ENCODE measurements at regions of chr9 and their contacts with region 1.

Region 1: DNA sequence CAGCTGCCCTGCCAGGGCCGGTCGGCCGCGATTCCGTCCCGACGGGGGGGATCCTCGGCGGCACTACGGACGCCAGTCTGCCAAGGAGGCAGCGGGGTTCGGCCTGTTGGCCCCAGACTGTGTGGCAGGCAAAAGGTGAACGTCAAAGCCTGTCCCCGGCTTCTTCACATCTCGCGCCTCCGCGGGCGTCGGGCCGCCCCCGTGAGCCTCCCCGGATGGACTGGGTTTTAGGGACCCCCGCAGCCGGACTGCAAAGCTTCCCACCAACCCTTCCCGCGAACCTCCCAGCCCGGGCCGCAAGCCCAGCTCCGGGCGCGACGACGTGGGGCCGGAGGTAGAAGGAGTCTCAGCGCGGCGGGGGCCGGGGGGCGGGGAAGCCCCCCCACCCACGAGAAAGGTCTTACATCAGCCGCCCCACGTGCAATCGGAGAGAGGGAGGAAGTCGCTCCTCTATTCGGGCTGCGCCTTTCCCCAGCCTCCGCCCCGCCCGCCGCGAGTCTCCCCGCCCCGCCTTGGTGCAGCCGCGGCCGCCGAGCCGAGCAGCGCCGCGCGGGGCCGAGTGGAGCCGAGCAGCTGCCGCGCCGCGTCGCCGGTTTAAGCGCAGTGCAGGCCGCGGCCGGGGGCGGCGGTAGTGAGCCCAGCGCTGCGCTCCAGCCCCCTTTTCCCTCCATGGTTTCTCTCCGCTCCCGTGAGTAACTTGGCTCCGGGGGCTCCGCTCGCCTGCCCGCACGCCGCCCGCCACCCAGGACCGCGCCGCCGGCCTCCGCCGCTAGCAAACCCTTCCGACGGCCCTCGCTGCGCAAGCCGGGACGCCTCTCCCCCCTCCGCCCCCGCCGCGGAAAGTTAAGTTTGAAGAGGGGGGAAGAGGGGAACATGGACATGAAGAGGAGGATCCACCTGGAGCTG is at the start of gene ANP32B:
- DNase-seq: peak; percentile 96
- H3K4me3 Mint-ChIP-seq: peak within 1 kb of the TSS; percentile 83
- H3K27ac Mint-ChIP-seq: peak within 1 kb of the TSS; percentile 93
- H3K4me1 Mint-ChIP-seq: peaks cover 37% of the 10 kb centered on the region
- H3K27me3 Mint-ChIP-seq: no peaks in the 10 kb centered on the region
- total RNA-seq, gene ANP32B: 352 to 358 TPM

Region 2: GRCh38 chr9:97696803-97697601 is 285.9 kb before region 1 on chr9 and contains the start of gene XPA:
- CTCF ChIA-PET with region 1: no interaction called
- POLR2A ChIA-PET with region 1: no interaction called
- intact Hi-C with region 1: loop called (anchors 5 kb)
- DNase-seq: peak; percentile 98
- H3K4me3 Mint-ChIP-seq: peak within 1 kb of the TSS; percentile 91
- H3K27ac Mint-ChIP-seq: peak within 1 kb of the TSS; percentile 91
- H3K4me1 Mint-ChIP-seq: peaks cover 47% of the 10 kb centered on the region
- H3K27me3 Mint-ChIP-seq: no peaks in the 10 kb centered on the region
- total RNA-seq, gene XPA: 8.5 to 9.6 TPM

Region 3: GRCh38 chr9:97906236-97906831 is 76.6 kb before region 1 on chr9:
- CTCF ChIA-PET with region 1: interaction called, 5 read pairs
- POLR2A ChIA-PET with region 1: interaction called, 3 read pairs
- intact Hi-C with region 1: loop called (anchors 5 kb)
- DNase-seq: peak; percentile 74
- H3K4me3 Mint-ChIP-seq: peak overlapping the region; percentile 66
- H3K27ac Mint-ChIP-seq: peak overlapping the region; percentile 94
- H3K4me1 Mint-ChIP-seq: peaks cover 78% of the 10 kb centered on the region
- H3K27me3 Mint-ChIP-seq: no peaks in the 10 kb centered on the region

Region 4: DNA sequence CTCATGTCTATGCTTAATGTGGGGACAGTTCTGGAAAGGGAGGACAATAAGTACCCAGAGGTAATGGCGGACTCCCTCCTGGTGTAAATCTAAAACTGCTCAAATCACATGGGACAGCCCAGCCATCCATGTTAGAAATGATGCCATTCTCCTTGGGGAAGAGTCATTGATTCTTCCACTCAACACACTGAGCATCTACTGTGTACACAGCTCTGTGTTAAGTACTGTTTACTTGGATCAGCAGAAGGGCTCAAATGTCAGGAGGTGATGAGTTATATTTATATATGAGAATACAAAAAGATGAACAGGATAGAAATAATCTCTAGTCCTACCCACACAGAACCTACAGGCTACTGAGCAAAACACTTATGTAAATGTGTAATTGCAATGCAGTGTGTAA is 41.8 kb after region 1 on chr9:
- CTCF ChIA-PET with region 1: no interaction called
- POLR2A ChIA-PET with region 1: no interaction called
- intact Hi-C with region 1: no loop called
- DNase-seq: no peak
- H3K4me3 Mint-ChIP-seq: no peak overlapping the region
- H3K27ac Mint-ChIP-seq: no peak overlapping the region
- H3K4me1 Mint-ChIP-seq: no peaks in the 10 kb centered on the region
- H3K27me3 Mint-ChIP-seq: no peaks in the 10 kb centered on the region

Region 5: DNA sequence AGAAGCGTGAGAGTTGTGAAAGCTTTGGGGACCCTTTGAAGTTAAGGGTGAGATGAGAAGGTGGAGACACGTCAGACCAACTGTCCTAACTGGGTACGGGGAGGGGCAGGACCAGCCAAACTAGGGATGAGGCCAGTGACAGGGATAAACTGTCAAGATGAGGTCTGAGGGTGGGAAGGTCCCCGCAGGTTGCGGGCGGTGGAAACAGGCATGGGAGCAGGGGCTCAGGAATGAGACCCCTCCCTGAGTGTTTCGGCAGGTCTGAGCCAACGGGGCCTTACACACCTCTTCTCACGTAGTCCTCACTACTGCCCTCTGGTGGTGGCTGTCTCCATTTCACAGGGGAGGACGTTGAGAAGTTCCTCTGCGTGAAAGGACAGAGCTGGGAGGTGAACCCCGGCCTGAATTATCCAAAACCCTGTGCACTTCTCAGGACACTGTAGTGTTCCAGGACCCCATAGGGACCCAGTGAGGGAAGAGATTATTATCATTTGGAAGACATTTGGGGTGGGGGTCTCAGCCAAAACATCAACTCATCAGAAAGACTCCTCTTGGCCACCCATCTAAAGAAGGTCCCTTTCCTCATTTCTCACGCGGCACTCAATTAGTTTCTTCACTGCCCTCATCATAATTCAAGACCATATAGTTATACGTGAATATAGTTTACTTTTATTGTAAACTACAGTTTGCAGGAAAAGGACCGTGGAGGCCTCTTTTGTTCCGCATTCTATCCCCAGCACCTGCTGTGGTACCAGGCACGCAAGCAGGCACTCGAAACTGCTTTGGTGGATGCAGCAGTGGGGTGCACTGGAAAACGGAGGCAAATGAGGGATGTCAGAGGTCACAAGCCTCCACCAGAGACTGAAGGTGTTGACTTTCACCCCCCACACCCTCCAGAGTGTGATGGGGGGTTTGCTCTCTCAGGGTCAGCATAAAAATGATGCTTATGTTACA is 51.9 kb after region 1 on chr9:
- CTCF ChIA-PET with region 1: interaction called, 20 read pairs
- POLR2A ChIA-PET with region 1: no interaction called
- intact Hi-C with region 1: no loop called
- DNase-seq: peak; percentile 92
- H3K4me3 Mint-ChIP-seq: peak overlapping the region; percentile 27
- H3K27ac Mint-ChIP-seq: no peak overlapping the region
- H3K4me1 Mint-ChIP-seq: peaks cover 8% of the 10 kb centered on the region
- H3K27me3 Mint-ChIP-seq: peaks cover 1% of the 10 kb centered on the region

Region 6: DNA sequence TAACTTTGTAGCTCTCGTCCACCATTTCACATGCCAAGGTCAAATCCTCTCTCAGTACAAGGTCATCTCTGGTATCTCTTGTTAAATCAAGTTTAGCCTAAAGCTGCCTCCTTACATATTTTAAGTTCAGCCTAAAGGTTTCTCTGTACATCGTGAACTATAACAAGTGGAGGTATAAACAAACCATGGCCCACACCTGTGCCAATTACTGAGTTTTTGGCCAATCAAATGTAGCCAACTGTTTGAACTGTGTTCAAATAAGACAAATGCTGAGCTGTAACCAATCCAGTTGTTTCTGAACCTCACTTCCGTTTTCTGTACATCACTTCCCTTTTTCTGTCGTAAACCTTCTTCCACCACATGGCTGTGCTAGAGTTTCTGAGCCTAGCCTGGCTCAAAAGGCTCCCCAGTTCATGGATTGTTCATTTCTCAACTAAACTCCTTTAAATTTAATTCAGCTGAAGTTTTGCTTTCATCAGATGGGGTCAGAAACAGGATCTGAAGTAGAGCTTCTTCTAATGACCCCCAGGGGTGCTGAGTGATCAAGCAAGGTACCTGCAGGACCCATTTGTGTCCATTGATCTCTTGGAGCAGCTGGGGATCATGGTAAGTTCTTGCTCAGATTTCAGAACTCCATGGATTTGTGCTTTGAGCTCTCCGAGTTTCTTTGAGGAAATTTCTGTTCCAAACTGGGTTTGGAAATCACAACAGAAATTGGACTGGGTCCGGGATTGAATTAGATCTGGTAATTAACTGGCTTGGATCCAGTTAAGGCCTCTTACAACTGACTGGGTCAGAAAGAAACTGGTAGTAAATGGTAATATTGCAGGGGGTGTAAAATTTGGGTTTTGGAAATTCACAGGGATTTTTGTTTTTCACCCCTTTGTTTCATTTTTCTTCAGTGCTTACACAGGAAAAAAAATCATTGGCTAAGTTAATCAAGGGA is 62.6 kb after region 1 on chr9:
- CTCF ChIA-PET with region 1: interaction called, 3 read pairs
- POLR2A ChIA-PET with region 1: interaction called, 11 read pairs
- intact Hi-C with region 1: no loop called
- DNase-seq: peak; percentile 44
- H3K4me3 Mint-ChIP-seq: peak overlapping the region; percentile 84
- H3K27ac Mint-ChIP-seq: peak overlapping the region; percentile 83
- H3K4me1 Mint-ChIP-seq: peaks cover 24% of the 10 kb centered on the region
- H3K27me3 Mint-ChIP-seq: no peaks in the 10 kb centered on the region

Region 7: GRCh38 chr9:98056269-98057137 is 73.6 kb after region 1 on chr9 and contains the start of gene NANS:
- CTCF ChIA-PET with region 1: interaction called, 3 read pairs
- POLR2A ChIA-PET with region 1: interaction called, 27 read pairs
- intact Hi-C with region 1: loop called (anchors 2 kb)
- DNase-seq: peak; percentile 95
- H3K4me3 Mint-ChIP-seq: peak within 1 kb of the TSS; percentile 92
- H3K27ac Mint-ChIP-seq: peak within 1 kb of the TSS; percentile 91
- H3K4me1 Mint-ChIP-seq: peaks cover 19% of the 10 kb centered on the region
- H3K27me3 Mint-ChIP-seq: no peaks in the 10 kb centered on the region
- total RNA-seq, gene NANS: 48.4 to 51.9 TPM

Region 8: DNA sequence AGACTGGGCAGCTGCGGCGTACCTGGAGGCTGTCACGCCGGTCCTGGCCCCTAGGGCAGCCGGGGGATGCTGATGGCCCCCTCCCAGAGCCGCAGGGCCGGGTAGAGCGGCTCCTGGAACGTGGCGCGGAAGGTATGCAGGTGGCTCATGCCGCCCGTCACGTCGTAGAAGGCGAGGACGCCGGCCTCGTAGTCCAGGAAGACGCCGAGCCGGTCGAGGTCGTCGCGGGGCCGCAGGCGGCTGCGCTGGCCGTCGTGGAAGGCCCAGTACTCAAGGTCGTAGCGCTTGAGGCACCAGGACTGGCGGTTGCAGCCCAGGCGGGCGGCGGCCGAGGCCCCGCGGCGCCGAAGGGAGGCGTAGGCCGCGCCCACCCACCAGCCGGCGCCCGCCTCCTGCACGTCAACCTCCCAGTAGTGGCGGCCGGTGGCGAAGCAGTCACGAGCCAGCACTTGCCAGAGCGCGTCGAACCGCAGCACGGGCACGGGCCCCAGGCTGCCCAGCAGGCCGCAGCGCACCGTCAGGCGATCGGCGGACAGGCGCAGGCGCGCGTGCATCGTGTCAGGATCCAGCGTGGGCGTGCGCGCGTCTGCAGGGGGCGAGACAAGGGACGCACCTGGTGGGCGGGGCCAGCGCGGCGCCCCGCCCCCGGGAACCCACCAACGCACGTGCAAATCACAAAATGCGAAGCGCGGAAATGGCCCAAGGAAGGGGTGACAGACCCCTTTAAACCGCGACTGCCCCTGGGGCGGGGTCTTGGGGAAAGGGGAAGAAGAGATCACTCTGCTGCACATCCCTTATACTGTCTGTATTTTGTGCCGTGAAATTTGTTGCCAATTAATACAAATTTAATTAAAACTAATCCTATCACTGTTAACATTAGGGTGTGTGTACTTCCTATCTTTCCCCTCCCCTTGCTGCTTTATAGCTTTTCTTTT is 104.8 kb after region 1 on chr9:
- CTCF ChIA-PET with region 1: no interaction called
- POLR2A ChIA-PET with region 1: no interaction called
- intact Hi-C with region 1: no loop called
- DNase-seq: peak; percentile 44
- H3K4me3 Mint-ChIP-seq: peak overlapping the region; percentile 61
- H3K27ac Mint-ChIP-seq: no peak overlapping the region
- H3K4me1 Mint-ChIP-seq: peaks cover 17% of the 10 kb centered on the region
- H3K27me3 Mint-ChIP-seq: no peaks in the 10 kb centered on the region

Region 9: DNA sequence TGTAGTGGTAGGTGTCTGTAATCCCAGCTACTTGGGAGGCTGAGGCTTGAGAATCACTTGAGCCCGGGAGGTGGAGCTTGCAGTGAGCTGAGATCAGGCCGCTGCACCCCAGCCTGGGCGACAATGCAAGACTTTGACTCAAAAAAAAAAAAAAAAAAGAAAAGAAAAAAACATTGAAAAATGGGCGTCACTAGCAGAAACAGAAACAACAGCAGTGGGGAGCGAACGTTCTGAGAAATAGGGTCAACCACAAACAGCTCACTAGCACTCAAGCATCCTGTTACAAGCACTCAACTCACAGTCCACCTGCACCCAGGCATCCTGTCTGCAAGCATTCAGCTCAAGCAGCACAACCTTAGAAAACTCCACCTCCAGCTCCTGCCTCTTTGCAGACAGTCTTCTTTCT is 118.9 kb after region 1 on chr9:
- CTCF ChIA-PET with region 1: interaction called, 3 read pairs
- POLR2A ChIA-PET with region 1: interaction called, 3 read pairs
- intact Hi-C with region 1: loop called (anchors 5 kb)
- DNase-seq: peak; percentile 89
- H3K4me3 Mint-ChIP-seq: peak overlapping the region; percentile 66
- H3K27ac Mint-ChIP-seq: peak overlapping the region; percentile 95
- H3K4me1 Mint-ChIP-seq: peaks cover 88% of the 10 kb centered on the region
- H3K27me3 Mint-ChIP-seq: no peaks in the 10 kb centered on the region

Measured in activated CD4-positive, alpha-beta memory T cell treated with anti-CD3 and anti-CD28 coated beads for 36 hours (primary cell).